ENCODE measurements at regions of chr7 and their contacts with region 1.

Region 1: GRCh38 chr7:116862234-116862950 is at the start of gene CAPZA2:
- DNase-seq: peak; percentile 88 to 99 (median 94)
- ATAC-seq: peak; percentile 86
- H3K4me3 ChIP-seq: peak within 1 kb of the TSS; percentile 79
- H3K4me3 Mint-ChIP-seq: peak within 1 kb of the TSS; percentile 99
- H3K27ac ChIP-seq: peak within 1 kb of the TSS; percentile 33 to 79
- H3K27ac Mint-ChIP-seq: peak within 1 kb of the TSS; percentile 94
- H3K4me1 ChIP-seq: peaks cover 23% of the 10 kb centered on the region
- H3K4me1 Mint-ChIP-seq: peaks cover 43% of the 10 kb centered on the region
- H3K27me3 ChIP-seq: no peaks in the 10 kb centered on the region
- H3K27me3 Mint-ChIP-seq: peaks cover 8% of the 10 kb centered on the region
- CTCF ChIP-seq: peak; percentile 22
- total RNA-seq, gene CAPZA2: 93.6 to 96.5 TPM

Region 2: GRCh38 chr7:114916261-114916892 is 1946.0 kb before region 1 on chr7:
- CTCF ChIA-PET with region 1: no interaction called
- POLR2A ChIA-PET with region 1: no interaction called
- intact Hi-C with region 1: loop called in 1 of 2 experiments (anchors 10 kb)
- DNase-seq: peak in 4 of 14 experiments; percentile 31 to 54 (median 52)
- ATAC-seq: peak; percentile 81
- H3K4me3 ChIP-seq: peak overlapping the region; percentile 27
- H3K4me3 Mint-ChIP-seq: peak overlapping the region; percentile 72
- H3K27ac ChIP-seq: peak overlapping the region; percentile 2 to 64
- H3K27ac Mint-ChIP-seq: peak overlapping the region; percentile 48
- H3K4me1 ChIP-seq: peaks cover 10% of the 10 kb centered on the region
- H3K4me1 Mint-ChIP-seq: peaks cover 32% of the 10 kb centered on the region
- H3K27me3 ChIP-seq: no peaks in the 10 kb centered on the region
- H3K27me3 Mint-ChIP-seq: no peaks in the 10 kb centered on the region
- CTCF ChIP-seq: no peak

Region 3: DNA sequence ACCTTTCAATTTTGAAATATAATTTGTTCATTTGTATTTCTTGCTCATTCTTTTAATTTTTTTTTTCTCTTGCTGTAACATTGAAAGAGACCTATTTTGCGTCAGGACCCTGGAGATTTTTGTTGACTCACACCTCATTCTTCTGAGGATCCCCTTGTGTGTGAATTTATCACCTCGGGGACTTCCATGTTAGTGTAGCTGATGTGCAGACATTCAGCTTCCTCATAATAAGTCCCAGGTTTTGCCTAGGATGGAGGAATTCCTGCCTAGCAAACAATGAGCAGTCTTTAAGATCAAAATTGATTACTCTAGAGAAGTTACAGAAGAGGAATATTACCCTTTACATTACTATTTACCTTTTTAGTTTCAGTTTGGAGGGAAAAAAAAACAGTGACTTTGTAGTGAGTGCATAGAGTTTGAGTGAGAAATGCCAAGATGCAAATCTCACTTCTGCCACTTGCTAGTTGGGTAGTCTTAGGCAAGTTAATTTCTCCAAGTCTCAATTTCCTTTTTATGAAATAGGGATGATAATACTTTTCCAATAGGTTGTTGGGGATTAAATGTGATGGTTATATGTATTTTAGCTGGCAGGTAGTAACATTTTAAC is 637.8 kb before region 1 on chr7:
- CTCF ChIA-PET with region 1: no interaction called
- POLR2A ChIA-PET with region 1: no interaction called
- intact Hi-C with region 1: loop called in 1 of 2 experiments (anchors 10 kb)
- DNase-seq: peak in 2 of 14 experiments; percentile 58 to 60
- ATAC-seq: peak; percentile 49
- H3K4me3 ChIP-seq: peak overlapping the region; percentile 19
- H3K4me3 Mint-ChIP-seq: peak overlapping the region; percentile 61
- H3K27ac ChIP-seq: no peak overlapping the region
- H3K27ac Mint-ChIP-seq: peak overlapping the region; percentile 73
- H3K4me1 ChIP-seq: peaks cover 44% of the 10 kb centered on the region
- H3K4me1 Mint-ChIP-seq: peaks cover 92% of the 10 kb centered on the region
- H3K27me3 ChIP-seq: no peaks in the 10 kb centered on the region
- H3K27me3 Mint-ChIP-seq: no peaks in the 10 kb centered on the region
- CTCF ChIP-seq: no peak

Region 4: GRCh38 chr7:116911801-116912200 is 49.4 kb after region 1 on chr7:
- CTCF ChIA-PET with region 1: no interaction called
- POLR2A ChIA-PET with region 1: no interaction called
- intact Hi-C with region 1: loop called in 1 of 2 experiments (anchors 10 kb)
- DNase-seq: no peak
- ATAC-seq: no peak
- H3K4me3 ChIP-seq: no peak overlapping the region
- H3K4me3 Mint-ChIP-seq: no peak overlapping the region
- H3K27ac ChIP-seq: no peak overlapping the region
- H3K27ac Mint-ChIP-seq: no peak overlapping the region
- H3K4me1 ChIP-seq: no peaks in the 10 kb centered on the region
- H3K4me1 Mint-ChIP-seq: no peaks in the 10 kb centered on the region
- H3K27me3 ChIP-seq: no peaks in the 10 kb centered on the region
- H3K27me3 Mint-ChIP-seq: no peaks in the 10 kb centered on the region
- CTCF ChIP-seq: no peak

Region 5: DNA sequence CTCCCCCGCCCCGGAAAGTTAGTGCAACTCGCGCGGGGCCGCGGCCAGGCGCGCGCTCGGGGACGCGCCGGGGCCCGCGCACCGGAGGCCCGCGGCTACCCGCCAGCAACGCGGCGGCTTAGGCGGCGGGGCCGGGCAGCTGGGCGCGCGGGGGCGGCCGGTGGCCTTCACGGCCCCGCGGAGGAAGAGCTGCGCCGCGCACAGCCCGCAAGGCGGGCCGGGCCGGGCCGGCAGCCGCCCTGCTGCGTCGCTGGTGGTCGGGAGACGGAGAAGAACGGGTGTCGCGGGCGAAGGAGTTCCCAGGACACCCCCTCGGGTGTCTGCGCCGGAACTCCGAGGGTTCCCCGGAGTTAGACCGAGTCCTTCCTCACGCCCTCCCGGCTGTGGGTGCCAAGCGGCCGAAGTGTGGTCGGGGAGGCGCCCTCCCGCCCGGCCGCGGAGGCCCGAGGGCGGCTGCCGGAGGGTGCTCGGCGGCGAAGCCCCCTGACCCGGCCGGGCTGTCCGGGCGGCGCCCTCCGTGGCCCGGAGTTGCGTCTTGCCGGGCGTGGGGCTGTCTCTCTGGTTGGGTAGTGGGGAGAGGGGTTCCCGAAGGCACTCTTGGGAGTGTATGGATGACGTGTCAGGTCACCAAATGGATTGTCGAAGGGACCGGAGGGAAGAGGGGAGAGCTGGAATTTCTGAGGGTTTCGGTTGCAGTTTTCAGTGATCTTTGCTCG is 91.5 kb after region 1 on chr7:
- CTCF ChIA-PET with region 1: interaction called, 3 read pairs
- POLR2A ChIA-PET with region 1: interaction called, 6 read pairs
- intact Hi-C with region 1: loop called (anchors 2 to 5 kb)
- DNase-seq: peak in 9 of 14 experiments; percentile 1 to 84 (median 36)
- ATAC-seq: peak; percentile 64
- H3K4me3 ChIP-seq: peak overlapping the region; percentile 72
- H3K4me3 Mint-ChIP-seq: peak overlapping the region; percentile 98
- H3K27ac ChIP-seq: no peak overlapping the region
- H3K27ac Mint-ChIP-seq: peak overlapping the region; percentile 81
- H3K4me1 ChIP-seq: peaks cover 16% of the 10 kb centered on the region
- H3K4me1 Mint-ChIP-seq: peaks cover 31% of the 10 kb centered on the region
- H3K27me3 ChIP-seq: no peaks in the 10 kb centered on the region
- H3K27me3 Mint-ChIP-seq: no peaks in the 10 kb centered on the region
- CTCF ChIP-seq: no peak

Region 6: GRCh38 chr7:117083648-117084047 is 221.3 kb after region 1 on chr7:
- CTCF ChIA-PET with region 1: no interaction called
- POLR2A ChIA-PET with region 1: no interaction called
- intact Hi-C with region 1: no loop called
- DNase-seq: no peak
- ATAC-seq: no peak
- H3K4me3 ChIP-seq: no peak overlapping the region
- H3K4me3 Mint-ChIP-seq: no peak overlapping the region
- H3K27ac ChIP-seq: no peak overlapping the region
- H3K27ac Mint-ChIP-seq: no peak overlapping the region
- H3K4me1 ChIP-seq: peaks cover 6% of the 10 kb centered on the region
- H3K4me1 Mint-ChIP-seq: peaks cover 39% of the 10 kb centered on the region
- H3K27me3 ChIP-seq: no peaks in the 10 kb centered on the region
- H3K27me3 Mint-ChIP-seq: no peaks in the 10 kb centered on the region
- CTCF ChIP-seq: no peak